MCF 10A (cell line): ENCODE measurements at regions of chr11 and their contacts with region 1.

Region 1: DNA sequence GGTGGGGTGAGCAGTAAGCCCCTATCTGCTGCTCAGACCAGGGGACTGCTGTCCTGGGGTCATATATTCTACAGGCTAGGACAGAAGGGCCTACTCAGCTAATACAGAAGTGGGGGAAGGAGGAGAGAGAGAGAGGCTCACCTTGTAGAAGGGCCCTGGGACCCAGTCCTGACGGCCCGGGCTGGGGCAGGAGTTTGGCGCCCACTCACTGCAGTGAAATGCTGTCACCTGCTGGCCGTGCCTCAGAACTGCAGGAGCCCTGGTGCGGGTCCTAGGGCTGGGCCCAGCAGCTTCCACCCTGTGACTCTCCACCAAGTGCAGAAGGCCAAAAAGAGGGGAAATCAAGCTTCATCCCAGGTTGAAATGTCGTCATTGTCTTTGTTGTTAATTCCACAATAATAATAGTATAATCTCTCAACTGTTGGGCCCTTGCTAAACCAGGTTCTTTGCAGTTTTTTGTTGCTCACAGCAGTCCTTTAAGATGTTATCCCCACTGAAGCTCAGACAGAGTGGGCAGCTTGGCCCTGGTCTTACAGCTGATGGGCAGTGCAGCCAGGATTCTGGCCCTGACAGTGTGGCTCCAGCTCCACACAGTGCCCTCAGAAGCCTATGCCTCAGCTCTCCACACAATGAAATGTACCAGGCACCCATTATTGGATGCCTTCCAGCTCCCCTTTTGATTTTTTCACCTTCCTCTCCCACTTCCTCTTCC is 29.6 kb downstream of the TRIM29 start:
- DNase-seq: peak; percentile 66
- H3K4me3 Mint-ChIP-seq: no peak overlapping the region
- H3K27ac Mint-ChIP-seq: no peak overlapping the region
- H3K4me1 Mint-ChIP-seq: no peaks in the 10 kb centered on the region
- H3K27me3 Mint-ChIP-seq: peaks cover 32% of the 10 kb centered on the region
- CTCF ChIP-seq: peak; percentile 99

Region 2: GRCh38 chr11:119481021-119481666 is 627.2 kb before region 1 on chr11:
- CTCF ChIA-PET with region 1: interaction called, 12 read pairs
- POLR2A ChIA-PET with region 1: interaction called, 4 read pairs
- intact Hi-C with region 1: loop called (anchors 1 kb)
- DNase-seq: peak; percentile 80
- H3K4me3 Mint-ChIP-seq: no peak overlapping the region
- H3K27ac Mint-ChIP-seq: peak overlapping the region; percentile 27
- H3K4me1 Mint-ChIP-seq: peaks cover 7% of the 10 kb centered on the region
- H3K27me3 Mint-ChIP-seq: peaks cover 14% of the 10 kb centered on the region
- CTCF ChIP-seq: peak; percentile 98

Region 3: GRCh38 chr11:119641983-119642745 is 466.1 kb before region 1 on chr11:
- CTCF ChIA-PET with region 1: interaction called, 6 read pairs
- POLR2A ChIA-PET with region 1: no interaction called
- intact Hi-C with region 1: loop called (anchors 1 kb)
- DNase-seq: peak; percentile 54
- H3K4me3 Mint-ChIP-seq: no peak overlapping the region
- H3K27ac Mint-ChIP-seq: no peak overlapping the region
- H3K4me1 Mint-ChIP-seq: no peaks in the 10 kb centered on the region
- H3K27me3 Mint-ChIP-seq: peaks cover 49% of the 10 kb centered on the region
- CTCF ChIP-seq: peak; percentile 31

Region 4: GRCh38 chr11:119999220-119999619 is 109.1 kb before region 1 on chr11:
- CTCF ChIA-PET with region 1: interaction called, 11 read pairs
- POLR2A ChIA-PET with region 1: interaction called, 4 read pairs
- intact Hi-C with region 1: no loop called
- DNase-seq: peak; percentile 24
- H3K4me3 Mint-ChIP-seq: no peak overlapping the region
- H3K27ac Mint-ChIP-seq: no peak overlapping the region
- H3K4me1 Mint-ChIP-seq: no peaks in the 10 kb centered on the region
- H3K27me3 Mint-ChIP-seq: peaks cover 57% of the 10 kb centered on the region
- CTCF ChIP-seq: peak; percentile 18

Region 5: GRCh38 chr11:120096369-120097191 is 11.7 kb before region 1 on chr11:
- CTCF ChIA-PET with region 1: interaction called, 28 read pairs
- POLR2A ChIA-PET with region 1: interaction called, 3 read pairs
- intact Hi-C with region 1: no loop called
- DNase-seq: no peak
- H3K4me3 Mint-ChIP-seq: no peak overlapping the region
- H3K27ac Mint-ChIP-seq: no peak overlapping the region
- H3K4me1 Mint-ChIP-seq: no peaks in the 10 kb centered on the region
- H3K27me3 Mint-ChIP-seq: peaks cover 20% of the 10 kb centered on the region
- CTCF ChIP-seq: no peak

Region 6: GRCh38 chr11:120137611-120138521 is 29.6 kb after region 1 on chr11 and contains the start of gene TRIM29:
- CTCF ChIA-PET with region 1: interaction called, 4 read pairs
- POLR2A ChIA-PET with region 1: interaction called, 10 read pairs
- intact Hi-C with region 1: no loop called
- DNase-seq: peak; percentile 73
- H3K4me3 Mint-ChIP-seq: peak within 1 kb of the TSS; percentile 88
- H3K27ac Mint-ChIP-seq: peak within 1 kb of the TSS; percentile 87
- H3K4me1 Mint-ChIP-seq: peaks cover 25% of the 10 kb centered on the region
- H3K27me3 Mint-ChIP-seq: no peaks in the 10 kb centered on the region
- CTCF ChIP-seq: peak; percentile 66
- total RNA-seq, gene TRIM29: 60.9 and 93.4 TPM in 2 replicates